Breast epithelium (tissue), 4 donors: ENCODE measurements at regions of chr2 and their contacts with region 1.

Region 1: GRCh38 chr2:100529900-100530299 is 32.9 kb upstream of the PDCL3 start:
- DNase-seq: no peak
- H3K4me3 ChIP-seq: no peak overlapping the region
- H3K27ac ChIP-seq: no peak overlapping the region
- H3K4me1 ChIP-seq: no peaks in the 10 kb centered on the region
- H3K27me3 ChIP-seq: no peaks in the 10 kb centered on the region
- CTCF ChIP-seq: no peak
- POLR2A ChIP-seq: no peak

Region 2: DNA sequence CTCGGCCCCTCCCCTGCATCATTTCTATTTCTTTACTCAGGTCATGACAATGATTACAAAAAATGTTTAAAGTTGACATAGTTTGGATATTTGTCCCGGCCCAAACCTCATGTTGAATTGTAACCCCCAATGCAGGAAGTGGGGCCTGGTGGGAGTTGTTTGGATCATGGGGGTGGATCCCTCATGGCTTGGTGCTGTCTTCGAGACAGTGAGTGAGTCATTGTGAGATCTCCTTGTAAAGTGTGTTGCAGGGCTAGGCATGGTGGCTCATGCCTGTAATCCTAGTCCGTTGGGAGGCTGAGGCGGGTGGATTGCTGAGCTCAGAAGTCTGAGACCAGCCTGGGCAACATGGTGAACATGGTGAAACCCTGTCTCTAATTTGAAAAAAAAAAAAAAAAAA is 1158.4 kb after region 1 on chr2:
- intact Hi-C with region 1: loop called (anchors 5 kb)
- DNase-seq: no peak
- H3K4me3 ChIP-seq: no peak overlapping the region
- H3K27ac ChIP-seq: no peak overlapping the region
- H3K4me1 ChIP-seq: no peaks in the 10 kb centered on the region
- H3K27me3 ChIP-seq: no peaks in the 10 kb centered on the region
- CTCF ChIP-seq: no peak
- POLR2A ChIP-seq: no peak